ENCODE measurements at regions of chr3 and their contacts with region 1.

Region 1: GRCh38 chr3:56923521-56924224 is 121.9 kb upstream of the ARHGEF3 start:
- DNase-seq: peak; percentile 47
- H3K4me3 Mint-ChIP-seq: peak overlapping the region; percentile 15
- H3K27ac Mint-ChIP-seq: peak overlapping the region; percentile 81
- H3K4me1 Mint-ChIP-seq: peaks cover 74% of the 10 kb centered on the region
- H3K27me3 Mint-ChIP-seq: no peaks in the 10 kb centered on the region

Region 2: DNA sequence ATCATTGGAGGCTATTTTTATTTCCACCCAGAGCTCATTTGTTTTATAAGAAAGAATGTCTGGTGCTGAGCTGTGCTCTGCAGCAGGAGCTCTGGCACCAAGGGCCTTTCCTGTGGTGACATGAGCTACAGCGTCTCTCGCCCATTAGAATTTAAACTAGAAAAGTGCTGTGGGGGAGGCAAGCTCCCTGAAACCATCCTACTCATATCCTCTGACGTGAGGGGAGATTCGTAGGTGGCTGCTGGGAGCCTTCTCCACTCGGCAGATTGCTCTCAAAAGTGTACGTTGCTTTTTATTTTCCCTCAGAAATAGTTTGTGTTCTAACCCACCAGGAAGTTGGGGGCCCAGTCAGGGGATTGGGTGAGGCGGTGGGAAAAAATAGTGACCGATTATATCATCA is 45.6 kb before region 1 on chr3:
- intact Hi-C with region 1: loop called (anchors 1 kb)
- DNase-seq: peak; percentile 14
- H3K4me3 Mint-ChIP-seq: peak overlapping the region; percentile 72
- H3K27ac Mint-ChIP-seq: peak overlapping the region; percentile 92
- H3K4me1 Mint-ChIP-seq: peaks cover 76% of the 10 kb centered on the region
- H3K27me3 Mint-ChIP-seq: no peaks in the 10 kb centered on the region

Region 3: DNA sequence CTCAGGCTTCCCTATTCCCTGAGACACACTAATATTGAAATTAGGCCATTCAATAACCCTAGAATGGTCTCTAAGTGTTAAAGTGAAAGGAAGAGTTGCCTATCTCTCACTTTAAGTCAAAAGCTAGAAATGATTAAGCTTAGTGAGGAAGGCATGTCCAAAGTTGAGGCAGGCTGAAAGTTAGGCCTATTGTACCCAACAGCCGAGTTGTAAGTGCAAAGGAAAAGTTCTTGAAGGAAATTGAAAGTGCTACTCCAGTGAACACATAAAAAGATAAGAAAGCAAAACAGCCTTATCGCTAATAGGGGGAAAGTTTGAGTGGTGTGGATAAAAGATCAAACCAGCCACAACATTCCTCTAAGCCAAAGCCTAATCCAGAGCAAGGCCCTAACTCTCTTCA is 18.9 kb after region 1 on chr3:
- intact Hi-C with region 1: loop called (anchors 1 kb)
- DNase-seq: no peak
- H3K4me3 Mint-ChIP-seq: peak overlapping the region; percentile 6
- H3K27ac Mint-ChIP-seq: peak overlapping the region; percentile 40
- H3K4me1 Mint-ChIP-seq: peaks cover 24% of the 10 kb centered on the region
- H3K27me3 Mint-ChIP-seq: peaks cover 9% of the 10 kb centered on the region

Region 4: DNA sequence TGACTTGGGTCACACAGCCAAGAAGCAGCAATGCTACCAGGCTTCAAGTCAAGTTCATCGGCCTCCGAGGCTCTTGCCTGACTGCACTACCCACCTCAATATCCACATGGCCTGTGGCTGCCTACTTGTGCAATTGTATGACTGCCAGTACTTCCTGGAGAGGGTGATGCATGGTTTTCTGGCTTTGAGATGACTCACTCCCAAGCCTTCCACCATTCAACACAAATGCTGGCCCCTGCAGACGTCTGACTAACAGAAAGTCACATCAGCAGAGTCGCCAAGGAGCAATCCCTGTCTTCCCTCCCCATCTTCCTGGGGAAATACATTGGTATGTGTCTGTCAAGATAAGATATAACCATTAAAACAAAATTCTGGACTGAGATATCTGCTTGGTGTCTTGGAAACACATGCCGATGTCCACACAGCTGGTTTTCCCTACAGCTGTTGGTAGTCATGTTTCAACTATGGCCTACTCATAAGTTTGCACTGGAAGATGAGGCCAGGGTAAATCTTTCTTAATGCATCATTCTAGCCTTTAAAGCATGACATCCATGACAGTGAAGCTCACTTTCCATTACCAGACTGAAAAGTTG is 57.2 kb after region 1 on chr3:
- intact Hi-C with region 1: loop called (anchors 2 kb)
- DNase-seq: peak; percentile 10
- H3K4me3 Mint-ChIP-seq: no peak overlapping the region
- H3K27ac Mint-ChIP-seq: peak overlapping the region; percentile 40
- H3K4me1 Mint-ChIP-seq: peaks cover 31% of the 10 kb centered on the region
- H3K27me3 Mint-ChIP-seq: no peaks in the 10 kb centered on the region